ENCODE measurements at regions of chr2 and their contacts with region 1.

Region 1: GRCh38 chr2:241702132-241703031 is 543 bp downstream of the ING5 start:
- DNase-seq: peak; percentile 79 to 94 (median 92)
- ATAC-seq: peak; percentile 82
- H3K4me3 ChIP-seq: peak overlapping the region; percentile 49 to 86
- H3K4me3 Mint-ChIP-seq: peak overlapping the region; percentile 85
- H3K27ac ChIP-seq: peak overlapping the region; percentile 63 to 71
- H3K27ac Mint-ChIP-seq: peak overlapping the region; percentile 82
- H3K4me1 ChIP-seq: peaks cover 11% of the 10 kb centered on the region
- H3K4me1 Mint-ChIP-seq: peaks cover 18% of the 10 kb centered on the region
- H3K27me3 ChIP-seq: no peaks in the 10 kb centered on the region
- H3K27me3 Mint-ChIP-seq: no peaks in the 10 kb centered on the region
- CTCF ChIP-seq: peak; percentile 79

Region 2: GRCh38 chr2:240566203-240567136 is 1135.9 kb before region 1 on chr2:
- CTCF ChIA-PET with region 1: no interaction called
- POLR2A ChIA-PET with region 1: no interaction called
- intact Hi-C with region 1: loop called (anchors 5 to 10 kb)
- DNase-seq: peak; percentile 89 to 97 (median 96)
- ATAC-seq: peak; percentile 62
- H3K4me3 ChIP-seq: peak overlapping the region; percentile 61 to 71
- H3K4me3 Mint-ChIP-seq: peak overlapping the region; percentile 94
- H3K27ac ChIP-seq: peak overlapping the region; percentile 79 to 93
- H3K27ac Mint-ChIP-seq: peak overlapping the region; percentile 99
- H3K4me1 ChIP-seq: peaks cover 85% of the 10 kb centered on the region
- H3K4me1 Mint-ChIP-seq: peaks cover 76% of the 10 kb centered on the region
- H3K27me3 ChIP-seq: no peaks in the 10 kb centered on the region
- H3K27me3 Mint-ChIP-seq: no peaks in the 10 kb centered on the region
- CTCF ChIP-seq: peak; percentile 87

Region 3: GRCh38 chr2:240832205-240832727 is 870.1 kb before region 1 on chr2:
- CTCF ChIA-PET with region 1: no interaction called
- POLR2A ChIA-PET with region 1: no interaction called
- intact Hi-C with region 1: loop called (anchors 1 to 2 kb)
- DNase-seq: peak; percentile 96 to 99 (median 99)
- ATAC-seq: peak; percentile 93
- H3K4me3 ChIP-seq: peak overlapping the region; percentile 49 to 64
- H3K4me3 Mint-ChIP-seq: no peak overlapping the region
- H3K27ac ChIP-seq: peak overlapping the region in 1 of 2 experiments; percentile 19
- H3K27ac Mint-ChIP-seq: no peak overlapping the region
- H3K4me1 ChIP-seq: peaks cover 11% of the 10 kb centered on the region
- H3K4me1 Mint-ChIP-seq: peaks cover 6% of the 10 kb centered on the region
- H3K27me3 ChIP-seq: peaks cover 4 to 9% of the 10 kb centered on the region in 2 experiments
- H3K27me3 Mint-ChIP-seq: peaks cover 12% of the 10 kb centered on the region
- CTCF ChIP-seq: no peak

Region 4: DNA sequence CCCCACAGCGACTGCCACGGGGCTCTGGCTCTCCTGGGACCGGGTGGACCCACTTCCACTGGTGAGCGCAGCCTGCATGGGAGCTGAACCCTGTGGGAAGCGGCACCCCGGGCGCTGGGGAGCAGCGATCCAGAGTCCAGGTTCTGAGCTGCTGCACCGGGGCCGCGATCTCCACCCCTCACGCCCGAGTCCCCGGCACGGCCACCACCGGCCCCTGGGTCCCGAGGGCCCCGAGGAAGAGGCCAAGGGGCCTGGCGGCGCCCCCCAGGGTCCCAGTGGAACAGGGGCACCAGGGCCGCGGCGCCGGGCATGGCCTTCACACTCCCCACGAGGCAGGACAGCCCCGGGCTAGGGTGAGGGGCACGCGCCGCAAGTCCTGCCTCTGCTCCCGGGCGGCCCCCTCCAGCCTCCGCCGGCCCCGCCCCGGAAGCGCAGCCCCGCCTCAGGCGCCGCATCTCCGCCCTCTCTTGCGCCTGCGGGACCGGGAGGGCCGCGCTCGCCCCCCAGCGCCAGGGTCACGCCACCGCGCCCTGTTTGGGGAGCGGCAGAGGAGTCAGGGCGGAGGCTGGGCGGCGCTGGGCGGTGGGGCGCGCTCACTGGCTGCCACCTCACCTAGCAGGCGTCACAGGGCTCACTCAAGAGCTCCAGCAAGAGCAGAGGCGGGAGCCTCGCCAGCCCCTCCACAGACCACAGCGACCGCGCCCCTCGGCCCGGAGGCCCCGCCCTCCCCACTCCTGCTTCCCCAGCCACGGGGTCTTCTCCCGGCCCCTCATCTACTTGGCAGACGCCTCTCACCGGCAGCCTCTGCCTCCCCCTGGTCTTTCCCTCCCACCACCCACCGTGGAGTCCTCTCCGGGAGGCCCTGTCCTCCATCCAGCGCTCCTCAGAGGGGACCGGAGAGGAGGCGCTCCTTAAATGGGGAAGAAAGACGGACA is 92.3 kb before region 1 on chr2:
- CTCF ChIA-PET with region 1: no interaction called
- POLR2A ChIA-PET with region 1: no interaction called
- intact Hi-C with region 1: loop called (anchors 2 to 5 kb)
- DNase-seq: peak; percentile 81 to 96 (median 92)
- ATAC-seq: peak; percentile 99
- H3K4me3 ChIP-seq: peak overlapping the region; percentile 53 to 59
- H3K4me3 Mint-ChIP-seq: peak overlapping the region; percentile 63
- H3K27ac ChIP-seq: peak overlapping the region; percentile 51 to 77
- H3K27ac Mint-ChIP-seq: peak overlapping the region; percentile 72
- H3K4me1 ChIP-seq: peaks cover 23% of the 10 kb centered on the region
- H3K4me1 Mint-ChIP-seq: peaks cover 26% of the 10 kb centered on the region
- H3K27me3 ChIP-seq: no peaks in the 10 kb centered on the region
- H3K27me3 Mint-ChIP-seq: no peaks in the 10 kb centered on the region
- CTCF ChIP-seq: peak; percentile 63

Region 5: GRCh38 chr2:241637000-241637791 is 65.2 kb before region 1 on chr2 and contains the starts of genes ATG4B and THAP4:
- CTCF ChIA-PET with region 1: interaction called, 3 read pairs
- POLR2A ChIA-PET with region 1: no interaction called
- intact Hi-C with region 1: loop called (anchors 1 kb)
- DNase-seq: peak; percentile 46 to 88 (median 76)
- ATAC-seq: peak; percentile 71
- H3K4me3 ChIP-seq: peak within 1 kb of the TSS; percentile 83 to 95
- H3K4me3 Mint-ChIP-seq: peak within 1 kb of the TSS; percentile 89
- H3K27ac ChIP-seq: peak within 1 kb of the TSS; percentile 80 to 96
- H3K27ac Mint-ChIP-seq: peak within 1 kb of the TSS; percentile 92
- H3K4me1 ChIP-seq: peaks cover 37% of the 10 kb centered on the region
- H3K4me1 Mint-ChIP-seq: peaks cover 55% of the 10 kb centered on the region
- H3K27me3 ChIP-seq: no peaks in the 10 kb centered on the region
- H3K27me3 Mint-ChIP-seq: no peaks in the 10 kb centered on the region
- CTCF ChIP-seq: no peak
- total RNA-seq, gene ATG4B: 94.0 to 94.5 TPM
- total RNA-seq, gene THAP4: 19.5 to 24.3 TPM

Region 6: GRCh38 chr2:241734467-241735208 is 32.3 kb after region 1 on chr2 and contains the start of gene D2HGDH:
- CTCF ChIA-PET with region 1: interaction called, 19 read pairs
- POLR2A ChIA-PET with region 1: interaction called, 27 read pairs
- intact Hi-C with region 1: loop called (anchors 1 kb)
- DNase-seq: peak; percentile 84 to 97 (median 94)
- ATAC-seq: peak; percentile 92
- H3K4me3 ChIP-seq: peak within 1 kb of the TSS; percentile 68 to 70
- H3K4me3 Mint-ChIP-seq: peak within 1 kb of the TSS; percentile 86
- H3K27ac ChIP-seq: peak within 1 kb of the TSS; percentile 26 to 65
- H3K27ac Mint-ChIP-seq: peak within 1 kb of the TSS; percentile 85
- H3K4me1 ChIP-seq: peaks cover 22% of the 10 kb centered on the region
- H3K4me1 Mint-ChIP-seq: peaks cover 25% of the 10 kb centered on the region
- H3K27me3 ChIP-seq: no peaks in the 10 kb centered on the region
- H3K27me3 Mint-ChIP-seq: no peaks in the 10 kb centered on the region
- CTCF ChIP-seq: no peak
- total RNA-seq, gene D2HGDH: 41.6 to 46.4 TPM

Region 7: GRCh38 chr2:241914542-241914941 is 212.2 kb after region 1 on chr2:
- CTCF ChIA-PET with region 1: no interaction called
- POLR2A ChIA-PET with region 1: no interaction called
- intact Hi-C with region 1: no loop called
- DNase-seq: no peak
- ATAC-seq: no peak
- H3K4me3 ChIP-seq: no peak overlapping the region
- H3K4me3 Mint-ChIP-seq: no peak overlapping the region
- H3K27ac ChIP-seq: no peak overlapping the region
- H3K27ac Mint-ChIP-seq: no peak overlapping the region
- H3K4me1 ChIP-seq: no peaks in the 10 kb centered on the region
- H3K4me1 Mint-ChIP-seq: no peaks in the 10 kb centered on the region
- H3K27me3 ChIP-seq: no peaks in the 10 kb centered on the region
- H3K27me3 Mint-ChIP-seq: no peaks in the 10 kb centered on the region
- CTCF ChIP-seq: no peak